Mammary epithelial cell (primary cell): ENCODE measurements at regions of chr17 and their contacts with region 1.

Region 1: DNA sequence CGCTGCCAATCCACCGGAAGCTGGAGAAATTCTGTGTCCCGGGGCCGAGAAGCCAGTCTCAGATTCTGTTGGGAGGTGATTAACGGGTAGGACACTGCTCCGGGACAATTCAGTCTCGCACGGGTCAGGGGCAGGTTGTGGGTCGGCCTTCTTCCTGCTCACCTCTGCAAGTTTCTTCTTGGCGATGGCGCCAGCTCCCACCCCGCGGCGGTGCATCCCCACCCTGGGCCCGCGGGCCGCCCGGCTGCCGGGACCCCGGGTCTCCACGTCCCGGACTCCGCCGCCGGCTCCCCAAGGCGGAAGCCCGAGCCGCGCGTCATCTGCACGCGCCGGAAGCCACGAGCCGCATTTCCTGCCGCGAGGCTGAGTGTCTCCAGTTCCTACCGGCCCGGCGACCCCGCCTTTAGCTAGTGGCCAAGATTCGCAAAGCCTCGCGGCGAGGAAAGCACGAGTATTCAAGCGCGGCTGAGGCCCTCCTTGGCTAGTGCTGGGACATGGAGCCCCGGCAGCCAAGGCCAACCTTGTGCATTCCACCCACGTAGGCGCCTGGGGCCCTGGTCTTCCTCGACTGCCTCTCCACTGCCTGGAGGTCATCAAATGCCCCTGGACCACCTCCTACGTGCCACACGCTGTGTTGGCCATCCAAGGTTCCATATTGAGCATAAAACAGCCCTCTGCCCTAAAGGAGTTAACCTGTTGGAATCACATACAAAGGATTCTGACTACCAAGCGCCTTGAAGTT is at the start of gene SNF8:
- DNase-seq: peak; percentile 86
- H3K4me3 ChIP-seq: peak within 1 kb of the TSS; percentile 82 to 86 (median 84)
- H3K27ac ChIP-seq: peak within 1 kb of the TSS; percentile 79
- H3K4me1 ChIP-seq: peaks cover 11% of the 10 kb centered on the region
- H3K27me3 ChIP-seq: no peaks in the 10 kb centered on the region
- CTCF ChIP-seq: no peak
- total RNA-seq, gene SNF8: 50.5 to 89.6 TPM

Region 2: DNA sequence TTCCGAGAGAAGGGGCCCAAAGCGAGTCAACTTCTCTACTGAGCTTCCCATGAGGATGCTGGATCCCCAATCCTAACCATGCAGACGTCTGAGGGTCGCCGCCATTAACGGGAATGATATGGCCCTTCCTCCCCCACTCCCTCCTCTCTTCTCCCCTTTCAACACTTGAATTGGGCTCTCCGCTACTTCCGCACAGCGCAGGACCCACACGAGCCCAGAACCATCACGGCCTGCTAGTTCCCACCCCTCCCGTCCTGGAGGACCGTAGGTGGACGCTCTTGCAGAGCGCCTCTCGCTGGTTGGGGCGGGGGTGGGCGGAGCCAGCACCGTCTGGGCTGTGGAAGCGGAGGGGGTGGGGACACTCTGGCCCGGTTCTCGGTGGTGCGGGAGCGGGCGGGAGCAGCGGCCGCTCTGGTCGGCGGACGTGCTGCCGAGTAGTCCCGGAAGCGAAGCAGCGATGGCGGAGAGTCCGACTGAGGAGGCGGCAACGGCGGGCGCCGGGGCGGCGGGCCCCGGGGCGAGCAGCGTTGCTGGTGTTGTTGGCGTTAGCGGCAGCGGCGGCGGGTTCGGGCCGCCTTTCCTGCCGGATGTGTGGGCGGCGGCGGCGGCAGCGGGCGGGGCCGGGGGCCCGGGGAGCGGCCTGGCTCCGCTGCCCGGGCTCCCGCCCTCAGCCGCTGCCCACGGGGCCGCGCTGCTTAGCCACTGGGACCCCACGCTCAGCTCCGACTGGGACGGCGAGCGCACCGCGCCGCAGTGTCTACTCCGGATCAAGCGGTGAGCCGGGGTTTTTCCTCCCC is 36.4 kb before region 1 on chr17 and contains the start of gene UBE2Z:
- CTCF ChIA-PET with region 1: no interaction called
- dilution Hi-C with region 1: no loop called
- in situ Hi-C with region 1: no loop called
- intact Hi-C with region 1: loop called (anchors 1 kb)
- DNase-seq: peak; percentile 95
- H3K4me3 ChIP-seq: peak within 1 kb of the TSS; percentile 66 to 89 (median 84)
- H3K27ac ChIP-seq: peak within 1 kb of the TSS; percentile 96
- H3K4me1 ChIP-seq: peaks cover 21% of the 10 kb centered on the region
- H3K27me3 ChIP-seq: no peaks in the 10 kb centered on the region
- CTCF ChIP-seq: peak in 1 of 2 donors; percentile 26
- total RNA-seq, gene UBE2Z: 104 to 132 TPM

Region 3: DNA sequence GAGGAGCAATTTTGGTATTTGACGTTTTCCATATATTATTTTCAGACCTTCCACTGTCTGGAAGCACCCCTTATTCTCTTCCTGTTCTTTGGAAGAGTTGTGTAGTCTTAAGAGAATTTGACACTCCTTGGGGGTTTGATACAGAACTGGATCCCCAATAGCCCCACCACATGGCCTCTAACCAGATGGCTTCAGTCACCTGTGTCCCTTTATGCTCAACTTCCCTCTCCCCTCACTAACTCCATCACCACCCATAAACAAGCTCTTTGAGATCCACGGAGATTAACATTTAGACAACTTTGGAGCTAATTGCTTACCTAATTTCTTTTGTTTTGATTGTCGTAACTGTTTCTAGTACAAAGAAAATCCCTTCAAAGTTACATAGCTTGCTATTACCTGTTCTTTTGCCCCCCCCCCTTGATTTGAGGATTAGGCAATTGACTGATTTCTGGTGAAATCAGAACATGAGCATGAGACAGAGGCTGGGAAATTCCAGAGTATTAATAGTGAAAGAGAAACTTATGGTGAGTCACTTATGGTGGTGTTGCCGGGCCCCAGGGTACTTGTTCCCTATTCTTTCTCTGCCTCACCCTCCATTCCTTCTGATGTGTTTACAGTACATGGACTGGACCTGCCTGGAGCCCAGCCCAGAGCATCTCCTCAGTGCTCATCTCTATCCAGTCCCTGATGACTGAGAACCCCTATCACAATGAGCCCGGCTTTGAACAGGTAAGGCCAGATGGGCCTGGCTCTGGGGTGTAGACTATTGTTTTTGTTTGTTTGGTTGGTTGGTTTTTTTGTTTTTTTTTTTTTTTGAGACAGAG is 29.0 kb before region 1 on chr17:
- CTCF ChIA-PET with region 1: no interaction called
- dilution Hi-C with region 1: no loop called
- in situ Hi-C with region 1: no loop called
- intact Hi-C with region 1: loop called (anchors 1 kb)
- DNase-seq: peak; percentile 96
- H3K4me3 ChIP-seq: no peak overlapping the region
- H3K27ac ChIP-seq: peak overlapping the region; percentile 96
- H3K4me1 ChIP-seq: peaks cover 27% of the 10 kb centered on the region
- H3K27me3 ChIP-seq: no peaks in the 10 kb centered on the region
- CTCF ChIP-seq: no peak

Region 4: GRCh38 chr17:49343273-49343672 is 398.6 kb after region 1 on chr17:
- CTCF ChIA-PET with region 1: no interaction called
- dilution Hi-C with region 1: no loop called
- in situ Hi-C with region 1: no loop called
- intact Hi-C with region 1: no loop called
- DNase-seq: peak; percentile 35
- H3K4me3 ChIP-seq: no peak overlapping the region
- H3K27ac ChIP-seq: no peak overlapping the region
- H3K4me1 ChIP-seq: peaks cover 5% of the 10 kb centered on the region
- H3K27me3 ChIP-seq: no peaks in the 10 kb centered on the region
- CTCF ChIP-seq: no peak